Heart left ventricle (tissue), 16 donors: ENCODE measurements at regions of chr7 and their contacts with region 1.

Region 1: DNA sequence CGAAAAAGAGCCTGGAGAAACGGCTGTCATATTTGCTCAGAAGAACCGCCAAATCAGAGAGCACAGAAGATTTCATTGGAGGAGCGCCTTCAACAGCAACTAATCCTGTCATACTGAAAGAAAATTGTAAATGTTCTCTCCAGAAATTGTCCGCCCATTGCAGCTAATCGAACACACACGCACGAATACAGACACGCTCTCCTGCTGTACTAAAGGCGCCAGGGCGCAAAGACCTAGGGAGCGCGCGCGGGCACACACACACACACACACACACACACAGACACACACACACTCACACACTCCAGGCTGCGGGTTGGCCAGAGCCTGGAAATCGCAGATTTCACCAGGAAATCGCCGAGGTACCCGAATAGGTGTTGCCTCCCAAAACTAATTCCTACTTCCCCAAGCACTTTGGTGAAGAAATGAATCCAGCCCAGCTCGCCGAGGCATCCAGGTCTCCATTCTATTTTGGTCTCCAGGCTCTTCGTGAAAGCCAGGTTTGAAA is at the start of gene CHRM2:
- DNase-seq: peak; percentile 22 to 48 (median 35)
- ATAC-seq: peak; percentile 50 to 57 (median 56)
- H3K4me3 ChIP-seq: peak within 1 kb of the TSS; percentile 21 to 81 (median 62)
- H3K27ac ChIP-seq: peak within 1 kb of the TSS; percentile 55 to 93 (median 83)
- H3K4me1 ChIP-seq: peaks cover 0 to 19% (median 4%) of the 10 kb centered on the region in 12 donors
- H3K27me3 ChIP-seq: peaks cover 0 to 40% (median 3%) of the 10 kb centered on the region in 9 donors
- CTCF ChIP-seq: no peak
- POLR2A ChIP-seq: no peak
- total RNA-seq, gene CHRM2: 25.3 to 124 (median 78.5) TPM

Region 2: DNA sequence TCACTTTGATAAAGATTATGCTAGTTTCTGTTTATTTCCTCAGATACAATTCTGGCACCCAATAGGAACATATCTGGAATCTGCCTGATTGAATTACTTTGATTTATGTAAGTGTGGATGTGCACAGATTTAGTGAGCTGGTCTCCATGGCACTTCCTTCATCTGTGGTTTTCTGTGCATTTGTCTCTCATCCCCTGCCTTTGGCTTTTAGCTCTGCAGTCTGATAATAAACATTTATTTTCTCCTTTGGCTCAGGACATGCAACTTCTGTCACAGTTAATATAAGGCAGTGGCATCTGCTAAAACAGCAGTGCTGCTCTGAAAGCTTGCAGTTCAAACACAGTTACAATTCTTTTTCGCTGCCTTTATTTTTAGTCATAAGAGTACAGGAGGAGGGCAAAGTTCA is 273.8 kb before region 1 on chr7:
- intact Hi-C with region 1: no loop called
- DNase-seq: no peak
- ATAC-seq: no peak
- H3K4me3 ChIP-seq: no peak overlapping the region
- H3K27ac ChIP-seq: peak overlapping the region in 1 of 12 donors; percentile 58
- H3K4me1 ChIP-seq: no peaks in the 10 kb centered on the region
- H3K27me3 ChIP-seq: no peaks in the 10 kb centered on the region
- CTCF ChIP-seq: no peak
- POLR2A ChIP-seq: no peak

Region 3: GRCh38 chr7:136807598-136807997 is 61.0 kb before region 1 on chr7:
- intact Hi-C with region 1: no loop called
- DNase-seq: no peak
- ATAC-seq: no peak
- H3K4me3 ChIP-seq: no peak overlapping the region
- H3K27ac ChIP-seq: no peak overlapping the region
- H3K4me1 ChIP-seq: no peaks in the 10 kb centered on the region
- H3K27me3 ChIP-seq: no peaks in the 10 kb centered on the region
- CTCF ChIP-seq: no peak
- POLR2A ChIP-seq: no peak

Region 4: DNA sequence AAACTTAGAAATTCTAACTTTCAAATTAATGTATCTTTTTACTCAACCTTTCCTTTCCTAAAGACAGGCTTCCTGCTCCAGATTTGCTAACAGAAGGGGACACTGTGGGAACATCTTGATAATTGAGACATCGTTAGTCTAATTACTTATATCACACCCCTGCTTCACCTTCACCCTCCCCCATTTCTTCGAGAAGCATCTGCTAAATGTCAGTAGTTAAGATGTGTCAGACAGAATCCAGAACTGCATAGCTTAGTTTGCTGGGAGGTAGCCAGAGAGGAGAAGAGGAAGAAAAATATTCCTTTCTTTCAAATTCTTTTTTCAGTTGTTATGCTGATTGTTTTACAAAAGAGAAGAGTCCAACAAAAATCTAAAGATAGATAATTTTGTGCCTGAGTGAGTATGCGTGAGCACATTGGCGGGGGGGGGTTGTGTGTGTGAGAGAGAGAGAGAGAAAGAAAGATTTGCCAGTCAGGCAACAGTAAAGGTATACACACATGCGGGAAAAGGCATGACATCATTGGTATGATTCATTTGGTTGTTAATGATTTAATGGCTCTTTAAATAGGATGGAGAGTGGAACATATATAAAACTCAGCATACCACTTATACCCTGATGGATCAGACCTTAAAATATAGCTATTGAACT is 282.6 kb after region 1 on chr7:
- intact Hi-C with region 1: loop called in 1 of 10 experiments (anchors 10 kb)
- DNase-seq: no peak
- ATAC-seq: peak in 3 of 4 donors; percentile 45 to 79 (median 70)
- H3K4me3 ChIP-seq: no peak overlapping the region
- H3K27ac ChIP-seq: peak overlapping the region in 7 of 12 donors; percentile 18 to 73 (median 47)
- H3K4me1 ChIP-seq: peaks cover 0 to 14% (median 0%) of the 10 kb centered on the region in 12 donors
- H3K27me3 ChIP-seq: no peaks in the 10 kb centered on the region
- CTCF ChIP-seq: no peak
- POLR2A ChIP-seq: no peak